Posterior cingulate gyrus (tissue), 11 donors: ENCODE measurements at regions of chr15 and their contacts with region 1.

Region 1: DNA sequence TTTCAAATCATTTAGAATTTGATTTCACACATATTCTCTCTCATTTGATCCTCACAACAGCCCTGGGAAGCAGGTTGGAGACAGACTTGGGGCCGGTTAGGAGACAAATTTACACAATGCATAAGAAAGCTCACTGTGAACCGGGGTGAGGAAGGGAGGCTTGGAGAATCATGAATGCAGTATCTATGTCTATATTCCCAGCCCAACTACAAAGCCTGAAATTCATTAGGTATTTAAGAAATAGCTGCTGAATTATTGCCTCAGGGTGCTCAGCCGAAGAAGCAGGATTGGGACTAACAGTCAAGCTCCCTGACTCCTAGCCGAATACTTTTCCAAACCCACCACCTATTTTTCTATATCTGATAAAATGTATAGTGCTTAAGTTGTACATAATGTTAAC is 8.4 kb upstream of the GOLGA6C start:
- DNase-seq: no peak

Region 2: DNA sequence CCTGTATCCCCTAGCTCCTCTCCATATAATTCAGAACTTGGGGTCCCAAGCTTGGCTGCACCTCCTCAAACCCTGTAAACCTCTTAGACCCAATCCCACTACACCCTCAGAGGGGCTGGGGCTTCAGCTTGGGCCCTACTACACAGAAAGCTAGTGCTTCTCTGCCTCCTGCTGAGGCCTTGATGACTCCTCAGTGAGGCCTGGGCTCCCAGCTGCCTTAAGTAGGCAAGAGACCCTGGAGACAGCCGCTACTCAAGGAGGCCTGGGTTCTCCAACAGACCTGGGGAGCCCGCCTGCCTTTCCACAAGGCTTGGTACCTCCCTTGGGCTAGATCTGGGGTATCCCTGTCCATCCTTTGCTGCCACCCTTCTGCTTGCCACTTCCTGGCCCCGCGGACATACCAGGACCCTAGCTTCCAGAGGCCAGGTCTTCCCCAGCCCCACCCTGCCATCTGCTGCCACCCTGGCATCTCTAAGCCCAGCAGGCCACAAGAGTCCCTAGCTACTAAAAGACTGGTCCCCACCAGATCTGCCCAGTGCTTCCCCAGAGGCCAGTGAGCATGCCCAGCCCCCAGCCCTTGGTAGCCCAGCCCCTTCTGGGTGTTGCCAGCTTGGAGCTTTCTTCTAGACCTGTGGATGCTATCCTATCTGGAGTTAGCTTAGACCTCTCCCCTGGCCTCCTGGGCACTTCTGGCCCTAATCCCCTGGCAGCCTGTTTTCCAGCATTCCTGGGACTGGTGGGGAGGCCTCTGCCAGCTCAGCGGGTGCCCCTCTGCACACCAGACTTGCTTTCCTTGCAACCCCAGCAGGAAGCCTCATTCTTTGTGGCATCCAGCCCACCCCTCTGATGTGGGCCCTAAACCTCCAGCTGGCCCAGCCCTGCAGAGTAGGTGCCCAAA is 34.4 kb before region 1 on chr15:
- intact Hi-C with region 1: no loop called
- DNase-seq: no peak

Region 3: GRCh38 chr15:75307778-75308391 is 58.2 kb after region 1 on chr15:
- intact Hi-C with region 1: loop called (anchors 10 kb)
- DNase-seq: peak in 4 of 10 donors; percentile 15 to 79 (median 52)

Region 4: DNA sequence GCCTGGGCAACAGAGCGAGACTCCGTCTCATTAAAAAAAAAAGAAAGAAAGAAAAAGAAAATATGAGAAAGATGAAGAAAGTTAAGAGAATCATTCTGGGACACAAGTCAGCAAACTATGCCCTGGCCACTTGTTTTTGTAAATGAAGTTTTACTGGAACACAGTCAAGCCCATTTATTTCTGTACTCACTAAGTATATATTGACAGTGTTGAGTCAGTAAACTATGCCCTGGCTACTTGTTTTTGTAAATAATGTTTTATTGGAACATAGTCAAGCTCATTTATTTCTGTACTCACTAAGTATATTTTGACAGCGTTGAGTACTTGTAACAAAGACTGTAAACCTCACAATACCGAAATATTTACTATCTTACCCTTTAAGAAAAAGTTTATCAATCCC is 244.0 kb after region 1 on chr15:
- intact Hi-C with region 1: no loop called
- DNase-seq: no peak

Region 5: GRCh38 chr15:75532413-75533147 is 282.9 kb after region 1 on chr15:
- intact Hi-C with region 1: no loop called
- DNase-seq: no peak

Region 6: DNA sequence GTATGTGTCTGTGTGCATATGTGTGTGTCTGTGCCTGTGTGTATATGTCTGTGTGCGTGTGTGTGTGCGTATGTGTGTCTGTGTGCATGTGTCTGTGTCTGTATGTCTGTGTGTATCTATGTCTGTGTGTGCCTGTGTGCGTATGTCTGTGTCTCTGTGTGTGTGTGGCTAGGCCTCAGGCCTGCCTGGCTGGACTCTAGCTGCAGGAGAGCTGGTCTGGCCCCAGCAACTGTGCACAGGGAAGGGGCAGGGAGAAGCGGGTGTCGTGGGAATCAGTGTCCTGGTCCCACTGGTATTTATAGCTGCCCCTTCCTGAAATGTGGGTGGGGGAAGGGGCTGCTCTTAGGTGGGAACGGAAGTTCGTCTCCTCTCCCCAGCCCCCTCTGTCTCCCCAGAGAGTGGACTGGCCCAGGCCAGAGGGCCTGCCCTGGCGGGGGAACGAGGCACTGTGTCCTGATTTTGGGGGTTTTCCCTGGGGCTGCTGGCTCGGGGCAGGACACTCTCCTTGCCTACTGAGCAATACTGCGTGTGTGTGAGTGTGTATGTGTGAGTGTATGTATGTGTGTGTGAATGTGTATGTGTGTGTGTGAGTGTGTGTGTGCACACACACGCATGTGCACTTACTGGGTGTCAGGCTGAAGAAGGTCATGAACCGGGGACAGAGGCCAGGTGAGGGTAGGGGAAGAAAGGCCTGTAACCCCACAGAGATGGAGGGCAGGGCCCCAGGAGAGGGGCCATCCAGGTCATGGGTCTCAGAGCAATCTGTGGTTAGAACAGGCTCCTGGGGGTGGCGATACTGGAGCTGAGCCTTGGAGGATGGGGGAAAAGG is 456.3 kb after region 1 on chr15:
- intact Hi-C with region 1: no loop called
- DNase-seq: no peak